AG04450 (cell line): ENCODE measurements at regions of chr12 and their contacts with region 1.

Region 1: DNA sequence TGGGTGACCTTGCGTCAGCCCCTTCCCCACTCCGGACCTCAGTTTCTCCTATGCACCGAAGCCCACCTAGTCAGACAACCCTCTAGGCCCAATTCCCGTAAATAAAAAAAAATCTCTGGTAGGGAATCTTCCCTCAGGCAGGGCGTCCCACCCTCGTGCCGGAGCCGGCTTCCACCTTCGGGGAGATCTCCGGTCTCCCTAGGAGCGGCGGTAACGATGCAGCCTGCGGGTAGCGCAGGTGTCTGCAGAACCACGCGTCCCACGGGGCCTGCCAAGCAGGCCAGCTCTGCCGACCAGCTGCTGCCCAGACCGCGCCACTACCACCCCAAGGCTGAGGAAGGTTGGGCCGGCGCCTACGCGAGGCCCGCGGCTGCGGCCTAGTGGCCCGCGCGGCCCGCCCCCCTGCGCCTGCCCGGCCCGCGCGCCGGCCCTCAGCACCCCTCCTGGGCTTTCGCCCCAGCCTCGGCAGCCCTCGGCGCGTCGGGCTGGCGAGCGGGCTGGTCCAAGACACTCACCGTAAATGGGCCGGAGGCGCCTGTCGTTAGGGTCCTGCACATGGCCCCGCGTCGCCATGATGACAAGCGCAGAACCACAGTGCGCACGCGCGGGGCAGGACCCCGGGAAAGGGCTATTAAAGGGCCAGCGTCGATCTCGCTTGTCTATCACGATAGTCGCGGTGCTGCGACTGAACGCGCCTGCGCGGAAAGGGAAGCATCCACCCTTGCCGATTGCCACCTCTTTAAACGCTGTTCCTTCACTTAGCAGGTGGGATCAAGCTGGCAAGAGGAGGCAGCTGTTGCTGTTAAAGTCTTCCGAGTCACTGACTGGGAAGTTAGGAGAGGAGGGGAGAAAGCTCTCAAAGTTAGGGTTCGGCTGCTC is at the start of gene NAA25:
- DNase-seq: no peak
- H3K4me3 ChIP-seq: peak within 1 kb of the TSS; percentile 96
- H3K27ac ChIP-seq: peak within 1 kb of the TSS; percentile 89
- H3K27me3 ChIP-seq: no peaks in the 10 kb centered on the region
- CTCF ChIP-seq: no peak
- polyA plus RNA-seq, gene NAA25: 16.8 and 17.9 TPM in 2 replicates

Region 2: GRCh38 chr12:112096667-112097066 is 11.8 kb before region 1 on chr12:
- CTCF ChIA-PET with region 1: interaction called, 10 read pairs
- POLR2A ChIA-PET with region 1: interaction called, 14 read pairs
- DNase-seq: no peak
- H3K4me3 ChIP-seq: no peak overlapping the region
- H3K27ac ChIP-seq: peak overlapping the region; percentile 52
- H3K27me3 ChIP-seq: no peaks in the 10 kb centered on the region
- CTCF ChIP-seq: no peak

Region 3: GRCh38 chr12:112125250-112125999 is 17.0 kb after region 1 on chr12 and contains the start of gene TRAFD1:
- CTCF ChIA-PET with region 1: interaction called, 4 read pairs
- POLR2A ChIA-PET with region 1: interaction called, 17 read pairs
- DNase-seq: peak; percentile 92
- H3K4me3 ChIP-seq: peak within 1 kb of the TSS; percentile 97
- H3K27ac ChIP-seq: peak within 1 kb of the TSS; percentile 80
- H3K27me3 ChIP-seq: no peaks in the 10 kb centered on the region
- CTCF ChIP-seq: no peak
- polyA plus RNA-seq, gene TRAFD1: 71.2 and 73.4 TPM in 2 replicates